Endothelial cell of umbilical vein (primary cell): ENCODE measurements at regions of chr9 and their contacts with region 1.

Region 1: GRCh38 chr9:35510745-35511428 is 21.0 kb downstream of the RUSC2 start:
- DNase-seq: peak; percentile 88
- H3K4me3 ChIP-seq: peak overlapping the region in 1 of 3 experiments; percentile 1
- H3K27ac ChIP-seq: peak overlapping the region; percentile 67
- H3K4me1 ChIP-seq: peaks cover 36% of the 10 kb centered on the region
- H3K27me3 ChIP-seq: no peaks in the 10 kb centered on the region
- CTCF ChIP-seq: peak; percentile 24 to 38
- POLR2A ChIP-seq: no peak

Region 2: DNA sequence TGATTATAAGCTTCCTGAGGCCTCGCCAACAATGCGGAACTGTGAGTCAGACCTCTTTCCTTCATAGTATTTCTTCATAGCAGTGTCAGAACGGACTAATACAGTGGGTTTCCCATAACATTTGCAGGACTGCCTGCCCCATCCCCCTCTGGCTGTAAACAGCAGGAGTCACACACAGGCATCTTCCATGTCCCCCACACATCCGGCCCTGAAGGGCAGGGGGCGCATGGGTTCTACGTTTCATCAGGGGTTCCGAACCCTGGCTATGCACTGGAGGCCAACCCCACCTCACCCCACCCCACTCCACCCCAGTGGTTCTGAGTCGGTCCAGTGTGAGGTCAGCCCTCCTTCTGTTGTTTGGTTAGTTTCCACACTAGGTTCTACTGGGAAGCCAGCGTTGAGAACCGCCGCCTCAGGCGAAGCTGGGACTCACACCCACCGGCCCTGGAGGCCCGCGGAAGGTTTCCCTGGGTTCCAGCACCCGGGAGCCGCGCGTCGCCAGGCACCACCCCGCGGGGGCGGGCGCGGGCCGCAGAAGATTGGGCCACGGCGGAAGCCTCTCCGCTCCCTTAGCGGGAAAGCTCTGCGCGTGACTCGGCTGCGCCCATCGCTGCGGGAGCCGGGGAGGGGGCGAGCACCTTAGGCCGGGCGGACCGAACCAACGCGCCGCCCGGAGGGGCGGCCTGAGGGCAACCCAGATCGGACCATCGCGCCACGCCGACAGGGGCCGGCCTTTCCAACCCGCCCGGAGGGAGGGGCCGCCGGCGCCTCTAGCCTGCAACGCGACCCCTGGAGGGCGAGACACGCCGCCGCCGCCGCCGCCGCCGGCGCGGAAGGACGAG is 21.4 kb before region 1 on chr9 and contains the start of gene RUSC2:
- CTCF ChIA-PET with region 1: interaction called, 7 read pairs
- POLR2A ChIA-PET with region 1: interaction called, 6 read pairs
- dilution Hi-C with region 1: no loop called
- intact Hi-C with region 1: loop called (anchors 1 kb)
- DNase-seq: peak; percentile 88
- H3K4me3 ChIP-seq: peak within 1 kb of the TSS; percentile 62 to 91 (median 66)
- H3K27ac ChIP-seq: peak within 1 kb of the TSS; percentile 96
- H3K4me1 ChIP-seq: peaks cover 10% of the 10 kb centered on the region
- H3K27me3 ChIP-seq: no peaks in the 10 kb centered on the region
- CTCF ChIP-seq: peak; percentile 30 to 38
- POLR2A ChIP-seq: peak; percentile 84
- total RNA-seq, gene RUSC2: 46.2 and 52.1 TPM in 2 replicates

Region 3: DNA sequence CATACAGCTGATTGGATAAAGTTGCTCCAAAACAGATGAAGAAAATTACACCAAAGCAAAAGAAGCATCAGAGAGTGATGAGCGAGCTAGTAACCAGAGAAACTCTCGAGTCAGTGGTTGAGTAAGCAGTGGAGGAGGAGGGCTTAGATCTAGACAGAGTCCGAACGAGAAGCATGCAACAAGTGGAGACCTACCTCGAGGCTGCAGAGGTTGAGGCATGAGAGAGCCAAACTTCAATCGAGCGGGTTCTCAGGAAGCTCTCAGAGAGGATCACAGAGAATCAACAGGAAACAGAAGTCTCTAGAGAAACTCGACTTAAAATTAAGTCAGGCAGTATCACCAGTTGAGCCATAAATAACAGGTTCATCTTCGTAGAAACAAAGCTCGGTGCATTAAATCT is 14.9 kb before region 1 on chr9:
- CTCF ChIA-PET with region 1: interaction called, 14 read pairs
- POLR2A ChIA-PET with region 1: interaction called, 3 read pairs
- dilution Hi-C with region 1: no loop called
- intact Hi-C with region 1: loop called (anchors 1 kb)
- DNase-seq: no peak
- H3K4me3 ChIP-seq: no peak overlapping the region
- H3K27ac ChIP-seq: no peak overlapping the region
- H3K4me1 ChIP-seq: peaks cover 18% of the 10 kb centered on the region
- H3K27me3 ChIP-seq: no peaks in the 10 kb centered on the region
- CTCF ChIP-seq: no peak
- POLR2A ChIP-seq: no peak

Region 4: GRCh38 chr9:35538361-35539234 is 27.7 kb after region 1 on chr9:
- CTCF ChIA-PET with region 1: interaction called, 28 read pairs
- POLR2A ChIA-PET with region 1: interaction called, 3 read pairs
- dilution Hi-C with region 1: no loop called
- intact Hi-C with region 1: no loop called
- DNase-seq: peak; percentile 83
- H3K4me3 ChIP-seq: peak overlapping the region in 2 of 3 experiments; percentile 28 to 52
- H3K27ac ChIP-seq: peak overlapping the region; percentile 77
- H3K4me1 ChIP-seq: peaks cover 30% of the 10 kb centered on the region
- H3K27me3 ChIP-seq: no peaks in the 10 kb centered on the region
- CTCF ChIP-seq: no peak
- POLR2A ChIP-seq: peak; percentile 42